ENCODE measurements at regions of chr12 and their contacts with region 1.

Region 1: GRCh38 chr12:14803011-14803829 is at the starts of genes C12orf60 and WBP11:
- DNase-seq: peak; percentile 93
- ATAC-seq: peak; percentile 99
- H3K4me3 Mint-ChIP-seq: no peak within 1 kb of the TSS
- H3K27ac Mint-ChIP-seq: no peak within 1 kb of the TSS
- H3K4me1 Mint-ChIP-seq: peaks cover 33% of the 10 kb centered on the region
- H3K27me3 Mint-ChIP-seq: no peaks in the 10 kb centered on the region
- total RNA-seq, gene C12orf60: 1.4 to 1.5 TPM
- total RNA-seq, gene WBP11: 98.2 to 98.6 TPM

Region 2: DNA sequence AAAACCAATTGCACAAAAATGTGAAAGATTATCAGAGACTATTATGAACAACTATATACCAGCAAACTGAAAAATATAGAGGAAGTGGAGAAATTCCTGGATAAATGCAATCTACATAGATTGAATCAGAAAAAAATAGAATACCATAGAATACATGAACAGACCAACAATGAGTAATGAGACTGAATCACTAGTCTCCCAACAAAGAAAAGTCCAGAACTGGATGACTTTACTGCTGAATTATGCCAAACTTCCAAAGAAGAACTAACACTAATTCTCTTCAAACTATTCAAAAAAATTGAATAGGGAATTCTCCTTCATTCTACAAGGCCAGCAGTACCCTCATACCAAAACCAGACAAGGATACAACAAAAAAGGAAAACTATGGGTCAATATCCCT is 167.4 kb before region 1 on chr12:
- CTCF ChIA-PET with region 1: no interaction called
- POLR2A ChIA-PET with region 1: no interaction called
- DNase-seq: no peak
- ATAC-seq: no peak
- H3K4me3 Mint-ChIP-seq: no peak overlapping the region
- H3K27ac Mint-ChIP-seq: no peak overlapping the region
- H3K4me1 Mint-ChIP-seq: peaks cover 4% of the 10 kb centered on the region
- H3K27me3 Mint-ChIP-seq: peaks cover 23% of the 10 kb centered on the region

Region 3: GRCh38 chr12:14723763-14724162 is 79.5 kb before region 1 on chr12:
- CTCF ChIA-PET with region 1: interaction called, 18 read pairs
- POLR2A ChIA-PET with region 1: no interaction called
- DNase-seq: peak; percentile 68
- ATAC-seq: peak; percentile 76
- H3K4me3 Mint-ChIP-seq: no peak overlapping the region
- H3K27ac Mint-ChIP-seq: no peak overlapping the region
- H3K4me1 Mint-ChIP-seq: no peaks in the 10 kb centered on the region
- H3K27me3 Mint-ChIP-seq: peaks cover 3% of the 10 kb centered on the region

Region 4: GRCh38 chr12:14782756-14783155 is 20.5 kb before region 1 on chr12:
- CTCF ChIA-PET with region 1: interaction called, 10 read pairs
- POLR2A ChIA-PET with region 1: interaction called, 3 read pairs
- DNase-seq: no peak
- ATAC-seq: no peak
- H3K4me3 Mint-ChIP-seq: no peak overlapping the region
- H3K27ac Mint-ChIP-seq: no peak overlapping the region
- H3K4me1 Mint-ChIP-seq: peaks cover 13% of the 10 kb centered on the region
- H3K27me3 Mint-ChIP-seq: no peaks in the 10 kb centered on the region

Region 5: GRCh38 chr12:14820022-14820421 is 16.8 kb after region 1 on chr12:
- CTCF ChIA-PET with region 1: no interaction called
- POLR2A ChIA-PET with region 1: no interaction called
- DNase-seq: no peak
- ATAC-seq: no peak
- H3K4me3 Mint-ChIP-seq: no peak overlapping the region
- H3K27ac Mint-ChIP-seq: no peak overlapping the region
- H3K4me1 Mint-ChIP-seq: peaks cover 9% of the 10 kb centered on the region
- H3K27me3 Mint-ChIP-seq: peaks cover 2% of the 10 kb centered on the region